ENCODE measurements at regions of chr13 and their contacts with region 1.

Region 1: GRCh38 chr13:95387733-95388207 is 86.5 kb upstream of the ABCC4 start:
- DNase-seq: no peak
- H3K4me3 ChIP-seq: no peak overlapping the region
- H3K27ac ChIP-seq: no peak overlapping the region
- H3K4me1 ChIP-seq: peaks cover 0 to 19% (median 12%) of the 10 kb centered on the region in 6 donors
- H3K27me3 ChIP-seq: peaks cover 0 to 80% (median 0%) of the 10 kb centered on the region in 7 donors
- CTCF ChIP-seq: no peak
- POLR2A ChIP-seq: no peak

Region 2: GRCh38 chr13:95296326-95296925 is 91.3 kb before region 1 on chr13:
- intact Hi-C with region 1: loop called (anchors 10 kb)
- DNase-seq: no peak
- H3K4me3 ChIP-seq: no peak overlapping the region
- H3K27ac ChIP-seq: no peak overlapping the region
- H3K4me1 ChIP-seq: peaks cover 0 to 42% (median 14%) of the 10 kb centered on the region in 6 donors
- H3K27me3 ChIP-seq: peaks cover 0 to 6% (median 0%) of the 10 kb centered on the region in 7 donors
- CTCF ChIP-seq: peak; percentile 20 to 74 (median 60)
- POLR2A ChIP-seq: no peak

Measured in spleen (tissue), 13 donors.